CD8-positive, alpha-beta T cell (primary cell): ENCODE measurements at regions of chr1 and their contacts with region 1.

Region 1: GRCh38 chr1:24688621-24689195 is 45.6 kb downstream of the SRRM1 start:
- DNase-seq: peak; percentile 10 to 75 (median 53)
- ATAC-seq: peak; percentile 77
- H3K4me3 ChIP-seq: no peak overlapping the region
- H3K4me3 Mint-ChIP-seq: no peak overlapping the region
- H3K27ac ChIP-seq: no peak overlapping the region
- H3K27ac Mint-ChIP-seq: no peak overlapping the region
- H3K4me1 ChIP-seq: no peaks in the 10 kb centered on the region
- H3K4me1 Mint-ChIP-seq: no peaks in the 10 kb centered on the region
- H3K27me3 ChIP-seq: no peaks in the 10 kb centered on the region
- H3K27me3 Mint-ChIP-seq: no peaks in the 10 kb centered on the region
- CTCF ChIP-seq: peak; percentile 67

Region 2: DNA sequence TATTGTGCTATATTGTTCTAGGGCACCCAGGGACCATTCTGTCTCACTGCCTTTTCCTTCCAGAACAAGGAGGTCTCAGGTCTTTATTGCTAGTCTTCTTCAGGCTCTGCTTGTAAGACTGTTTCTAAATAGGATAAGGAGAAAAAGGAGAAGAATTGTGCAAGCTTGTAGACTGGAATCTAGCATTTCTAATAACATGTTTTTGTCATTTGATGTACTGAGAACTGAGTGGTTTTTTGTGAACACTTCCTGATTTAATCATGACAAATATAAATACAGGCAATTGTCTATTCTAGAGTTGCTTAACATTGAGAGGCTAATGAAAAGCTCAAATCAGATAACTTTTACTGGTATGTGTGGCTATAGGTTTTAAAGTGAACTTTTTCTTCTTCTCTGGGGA is 134.2 kb after region 1 on chr1:
- CTCF ChIA-PET with region 1: interaction called, 197 read pairs
- POLR2A ChIA-PET with region 1: no interaction called
- intact Hi-C with region 1: no loop called
- DNase-seq: no peak
- ATAC-seq: no peak
- H3K4me3 ChIP-seq: no peak overlapping the region
- H3K4me3 Mint-ChIP-seq: no peak overlapping the region
- H3K27ac ChIP-seq: no peak overlapping the region
- H3K27ac Mint-ChIP-seq: no peak overlapping the region
- H3K4me1 ChIP-seq: no peaks in the 10 kb centered on the region
- H3K4me1 Mint-ChIP-seq: no peaks in the 10 kb centered on the region
- H3K27me3 ChIP-seq: peaks cover 0 to 3% of the 10 kb centered on the region in 2 experiments
- H3K27me3 Mint-ChIP-seq: peaks cover 6% of the 10 kb centered on the region
- CTCF ChIP-seq: no peak

Region 3: DNA sequence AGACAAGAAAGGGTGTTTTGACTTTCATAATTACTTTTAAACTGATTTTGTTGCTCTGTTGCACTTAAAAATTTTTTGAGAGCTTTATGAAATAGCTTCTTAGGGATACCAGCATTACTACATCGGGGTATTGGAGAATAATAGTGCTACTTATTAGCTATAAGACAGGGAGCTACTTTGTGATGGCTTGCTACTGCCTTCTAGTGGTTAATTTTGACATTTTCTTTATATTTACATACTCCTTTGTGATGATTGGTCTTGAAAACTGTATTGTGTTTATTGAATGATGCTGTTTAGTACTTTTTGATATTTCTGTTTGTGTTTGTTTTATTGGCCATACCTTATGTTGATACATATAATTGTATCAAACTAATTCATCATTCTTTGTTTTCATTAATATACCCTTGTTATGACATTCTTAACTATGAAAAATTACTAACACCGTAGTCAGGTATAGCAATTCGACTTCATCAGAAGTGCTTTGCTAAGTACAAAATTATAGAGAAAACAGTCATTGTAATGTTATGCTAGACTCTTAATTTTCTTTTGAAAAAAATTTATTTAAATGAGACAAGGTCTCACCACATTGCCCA is 142.1 kb after region 1 on chr1:
- CTCF ChIA-PET with region 1: interaction called, 197 read pairs
- POLR2A ChIA-PET with region 1: no interaction called
- intact Hi-C with region 1: loop called (anchors 2 kb)
- DNase-seq: peak in 2 of 9 experiments; percentile 68 to 74
- ATAC-seq: peak; percentile 52
- H3K4me3 ChIP-seq: no peak overlapping the region
- H3K4me3 Mint-ChIP-seq: no peak overlapping the region
- H3K27ac ChIP-seq: no peak overlapping the region
- H3K27ac Mint-ChIP-seq: no peak overlapping the region
- H3K4me1 ChIP-seq: no peaks in the 10 kb centered on the region
- H3K4me1 Mint-ChIP-seq: no peaks in the 10 kb centered on the region
- H3K27me3 ChIP-seq: peaks cover 0 to 3% of the 10 kb centered on the region in 2 experiments
- H3K27me3 Mint-ChIP-seq: peaks cover 13% of the 10 kb centered on the region
- CTCF ChIP-seq: peak; percentile 95

Region 4: DNA sequence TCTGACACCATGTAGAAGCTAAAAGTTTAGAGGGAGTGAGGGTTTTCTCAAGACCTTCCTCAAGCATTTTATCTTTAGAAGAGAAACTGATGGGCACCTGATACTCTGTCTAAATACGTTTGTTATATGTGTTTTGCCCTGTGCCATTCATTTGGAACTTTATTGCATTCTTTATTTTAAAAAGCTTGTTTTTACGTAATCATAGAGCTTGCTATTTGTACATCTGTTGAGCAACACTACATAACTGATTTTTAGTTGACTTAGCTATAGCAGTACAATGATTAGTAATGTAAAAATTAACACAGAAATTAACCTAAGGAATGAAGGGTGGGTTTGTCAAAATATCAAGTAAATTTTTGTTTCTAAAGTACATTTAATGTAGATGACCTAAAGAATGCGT is 152.9 kb after region 1 on chr1:
- CTCF ChIA-PET with region 1: interaction called, 119 read pairs
- POLR2A ChIA-PET with region 1: no interaction called
- intact Hi-C with region 1: no loop called
- DNase-seq: no peak
- ATAC-seq: no peak
- H3K4me3 ChIP-seq: no peak overlapping the region
- H3K4me3 Mint-ChIP-seq: no peak overlapping the region
- H3K27ac ChIP-seq: no peak overlapping the region
- H3K27ac Mint-ChIP-seq: no peak overlapping the region
- H3K4me1 ChIP-seq: no peaks in the 10 kb centered on the region
- H3K4me1 Mint-ChIP-seq: peaks cover 2% of the 10 kb centered on the region
- H3K27me3 ChIP-seq: no peaks in the 10 kb centered on the region
- H3K27me3 Mint-ChIP-seq: peaks cover 5% of the 10 kb centered on the region
- CTCF ChIP-seq: no peak

Region 5: GRCh38 chr1:25204797-25205480 is 516.2 kb after region 1 on chr1:
- CTCF ChIA-PET with region 1: interaction called, 10 read pairs
- POLR2A ChIA-PET with region 1: no interaction called
- intact Hi-C with region 1: no loop called
- DNase-seq: peak in 5 of 9 experiments; percentile 13 to 73 (median 50)
- ATAC-seq: peak; percentile 70
- H3K4me3 ChIP-seq: no peak overlapping the region
- H3K4me3 Mint-ChIP-seq: no peak overlapping the region
- H3K27ac ChIP-seq: no peak overlapping the region
- H3K27ac Mint-ChIP-seq: no peak overlapping the region
- H3K4me1 ChIP-seq: no peaks in the 10 kb centered on the region
- H3K4me1 Mint-ChIP-seq: peaks cover 2% of the 10 kb centered on the region
- H3K27me3 ChIP-seq: no peaks in the 10 kb centered on the region
- H3K27me3 Mint-ChIP-seq: peaks cover 10% of the 10 kb centered on the region
- CTCF ChIP-seq: peak; percentile 85